ENCODE measurements at regions of chr4 and their contacts with region 1.

Region 1: GRCh38 chr4:77156533-77156911 is 485 bp upstream of the CCNG2 start:
- DNase-seq: peak; percentile 89 to 99
- H3K4me3 ChIP-seq: peak overlapping the region; percentile 76 to 94 (median 92)
- H3K27ac ChIP-seq: peak overlapping the region; percentile 100
- H3K4me1 ChIP-seq: peaks cover 0 to 6% (median 2%) of the 10 kb centered on the region in 4 experiments; a peak in 4 of 7 replicates
- H3K27me3 ChIP-seq: no peaks in the 10 kb centered on the region
- CTCF ChIP-seq: no peak
- EP300 ChIP-seq: no peak
- POLR2A ChIP-seq: no peak; a peak in 1 of 3 replicates
- RAD21 ChIP-seq: no peak

Region 2: DNA sequence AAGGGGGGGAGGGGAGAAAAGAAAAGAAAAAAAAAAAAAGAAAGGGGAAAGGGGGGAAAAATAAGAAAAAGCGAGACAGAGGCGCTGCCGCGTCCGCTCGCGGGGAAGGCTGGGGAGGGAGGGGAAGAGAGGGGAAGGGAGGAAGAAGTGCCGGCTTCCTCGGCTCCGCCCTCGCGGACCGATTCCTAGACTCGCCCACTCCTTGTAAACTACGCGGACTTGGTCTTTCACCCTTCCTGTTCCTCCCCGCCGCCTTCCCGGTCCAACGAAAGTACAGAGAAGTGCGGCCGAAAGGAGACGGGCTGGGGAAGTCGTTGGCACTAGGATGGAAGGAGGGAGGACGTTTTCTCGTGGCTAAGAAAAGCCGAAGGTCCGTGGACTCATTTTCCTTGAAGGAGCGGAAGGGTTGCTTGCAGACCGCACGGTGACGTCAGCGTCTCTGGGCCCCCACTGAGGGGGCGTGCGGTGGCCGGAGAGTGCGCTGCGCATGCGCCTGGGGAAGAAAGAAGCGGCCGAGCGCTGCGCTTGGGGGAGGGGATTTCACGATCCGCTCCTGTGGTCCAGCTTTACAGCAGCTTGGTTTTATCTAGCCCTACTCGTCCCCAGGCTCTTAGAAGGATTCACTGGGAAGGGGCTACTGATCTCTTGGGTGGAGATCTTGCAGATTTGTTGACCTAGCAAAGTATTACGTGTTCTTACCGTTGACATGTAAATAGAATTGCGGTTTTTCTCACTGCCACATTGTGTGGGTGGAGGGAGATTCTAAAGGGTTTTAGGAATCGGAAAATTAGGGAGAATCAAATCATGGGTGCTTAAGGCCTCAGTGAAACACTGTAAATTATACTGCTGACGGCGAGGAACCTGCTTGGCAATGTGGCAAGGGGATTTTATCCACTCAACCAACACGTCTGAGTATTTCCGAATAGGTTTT is 80.4 kb before region 1 on chr4 and contains the start of gene CCNI:
- CTCF ChIA-PET with region 1: interaction called, 3 read pairs
- POLR2A ChIA-PET with region 1: interaction called, 39 read pairs
- DNase-seq: peak; percentile 92 to 97
- H3K4me3 ChIP-seq: peak within 1 kb of the TSS; percentile 79 to 96 (median 90)
- H3K27ac ChIP-seq: peak within 1 kb of the TSS; percentile 100
- H3K4me1 ChIP-seq: peaks cover 0 to 7% (median 3%) of the 10 kb centered on the region in 4 experiments; a peak in 3 of 7 replicates
- H3K27me3 ChIP-seq: no peaks in the 10 kb centered on the region
- CTCF ChIP-seq: no peak
- EP300 ChIP-seq: no peak
- POLR2A ChIP-seq: peak; percentile 52 to 90
- RAD21 ChIP-seq: no peak
- total RNA-seq, gene CCNI: 223 and 234 TPM in 2 replicates

Region 3: GRCh38 chr4:77113069-77113468 is 43.5 kb before region 1 on chr4:
- CTCF ChIA-PET with region 1: no interaction called
- POLR2A ChIA-PET with region 1: no interaction called
- DNase-seq: no peak
- H3K4me3 ChIP-seq: no peak overlapping the region
- H3K27ac ChIP-seq: no peak overlapping the region
- H3K4me1 ChIP-seq: no peaks in the 10 kb centered on the region
- H3K27me3 ChIP-seq: no peaks in the 10 kb centered on the region
- CTCF ChIP-seq: no peak
- EP300 ChIP-seq: no peak
- POLR2A ChIP-seq: no peak
- RAD21 ChIP-seq: no peak

Region 4: DNA sequence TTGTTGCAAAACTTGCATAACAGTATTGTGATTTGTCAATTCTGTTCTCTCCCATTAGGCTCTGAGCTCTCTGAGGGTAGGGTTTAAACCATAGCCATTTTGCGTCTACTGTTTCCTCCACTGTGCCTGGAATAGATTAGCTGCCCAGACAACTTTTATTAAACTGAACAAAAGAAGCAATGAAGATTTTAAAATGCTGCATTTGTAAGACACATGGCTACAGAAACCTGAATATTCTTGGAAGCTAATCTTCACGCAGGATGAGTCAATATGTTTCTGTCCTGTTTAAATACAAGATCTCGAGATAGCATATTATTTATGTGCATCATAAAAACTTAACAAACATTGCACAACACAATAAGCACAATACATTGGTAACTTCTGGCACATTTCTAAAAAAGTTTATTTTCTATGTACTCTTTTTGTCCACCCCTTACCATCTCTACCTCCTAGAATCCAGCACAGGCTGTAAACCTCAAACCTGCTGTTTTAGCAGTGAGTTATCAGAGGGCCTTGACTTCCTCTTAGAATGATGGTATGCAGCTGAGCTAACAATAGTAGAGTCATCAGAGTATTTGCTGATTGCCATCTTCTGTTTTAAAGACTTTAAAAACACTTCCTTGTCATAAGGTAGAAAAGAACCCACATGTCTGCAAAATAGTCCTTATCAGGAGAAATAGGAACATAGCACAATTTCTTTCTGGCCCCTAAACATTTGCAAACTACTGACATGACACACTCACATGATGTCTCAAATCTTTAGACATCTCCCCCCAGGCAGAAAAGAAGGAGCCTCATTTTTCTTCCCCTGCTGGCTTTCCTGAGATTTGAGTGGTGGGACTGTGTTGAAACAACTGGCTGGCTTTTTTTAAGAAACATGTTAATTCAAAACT is 10.1 kb before region 1 on chr4:
- CTCF ChIA-PET with region 1: no interaction called
- POLR2A ChIA-PET with region 1: interaction called, 11 read pairs
- DNase-seq: no peak
- H3K4me3 ChIP-seq: no peak overlapping the region
- H3K27ac ChIP-seq: no peak overlapping the region
- H3K4me1 ChIP-seq: no peaks in the 10 kb centered on the region
- H3K27me3 ChIP-seq: no peaks in the 10 kb centered on the region
- CTCF ChIP-seq: no peak
- EP300 ChIP-seq: no peak
- POLR2A ChIP-seq: no peak
- RAD21 ChIP-seq: no peak

Region 5: DNA sequence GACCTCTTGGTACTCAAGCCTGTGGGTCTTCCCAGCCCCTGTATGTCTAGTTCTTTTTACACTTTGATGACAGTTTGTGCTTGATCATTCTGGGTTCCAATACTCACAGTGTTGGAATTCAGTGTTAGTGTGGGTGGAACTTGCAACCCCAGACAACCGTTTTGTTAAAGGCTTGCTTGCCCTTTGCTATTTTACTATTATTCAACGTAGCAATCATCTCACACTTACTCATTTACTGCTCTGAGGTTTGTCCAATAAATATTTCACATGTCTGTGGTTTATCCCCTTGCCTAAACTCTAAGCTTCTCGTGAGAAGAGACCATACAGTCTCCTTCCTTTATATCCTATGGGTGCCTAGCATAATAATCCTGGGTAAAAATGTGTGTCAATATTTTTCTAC is 15.8 kb after region 1 on chr4:
- CTCF ChIA-PET with region 1: interaction called, 4 read pairs
- POLR2A ChIA-PET with region 1: interaction called, 16 read pairs
- DNase-seq: no peak
- H3K4me3 ChIP-seq: no peak overlapping the region
- H3K27ac ChIP-seq: no peak overlapping the region
- H3K4me1 ChIP-seq: peaks cover 0 to 3% (median under 1%) of the 10 kb centered on the region in 4 experiments; a peak in 4 of 7 replicates
- H3K27me3 ChIP-seq: peaks cover 12 to 25% (median 20%) of the 10 kb centered on the region in 4 experiments
- CTCF ChIP-seq: no peak
- EP300 ChIP-seq: no peak
- POLR2A ChIP-seq: no peak
- RAD21 ChIP-seq: no peak

Region 6: GRCh38 chr4:77248810-77249209 is 92.3 kb after region 1 on chr4:
- CTCF ChIA-PET with region 1: no interaction called
- POLR2A ChIA-PET with region 1: no interaction called
- DNase-seq: no peak
- H3K4me3 ChIP-seq: no peak overlapping the region
- H3K27ac ChIP-seq: no peak overlapping the region
- H3K4me1 ChIP-seq: no peaks in the 10 kb centered on the region
- H3K27me3 ChIP-seq: peaks cover 0 to 2% (median 0%) of the 10 kb centered on the region in 4 experiments; a peak in 1 of 7 replicates
- CTCF ChIP-seq: no peak
- EP300 ChIP-seq: no peak
- POLR2A ChIP-seq: no peak
- RAD21 ChIP-seq: no peak